Lower leg skin (tissue), 4 donors: ENCODE measurements at regions of chr14 and their contacts with region 1.

Region 1: GRCh38 chr14:61475316-61475715 is 153.9 kb downstream of the PRKCH start:
- DNase-seq: no peak
- H3K4me3 ChIP-seq: no peak overlapping the region
- CTCF ChIP-seq: no peak
- POLR2A ChIP-seq: no peak

Region 2: GRCh38 chr14:60862286-60862685 is 613.0 kb before region 1 on chr14:
- intact Hi-C with region 1: no loop called
- DNase-seq: peak in 1 of 2 donors; percentile 36
- H3K4me3 ChIP-seq: no peak overlapping the region
- CTCF ChIP-seq: no peak
- POLR2A ChIP-seq: no peak

Region 3: DNA sequence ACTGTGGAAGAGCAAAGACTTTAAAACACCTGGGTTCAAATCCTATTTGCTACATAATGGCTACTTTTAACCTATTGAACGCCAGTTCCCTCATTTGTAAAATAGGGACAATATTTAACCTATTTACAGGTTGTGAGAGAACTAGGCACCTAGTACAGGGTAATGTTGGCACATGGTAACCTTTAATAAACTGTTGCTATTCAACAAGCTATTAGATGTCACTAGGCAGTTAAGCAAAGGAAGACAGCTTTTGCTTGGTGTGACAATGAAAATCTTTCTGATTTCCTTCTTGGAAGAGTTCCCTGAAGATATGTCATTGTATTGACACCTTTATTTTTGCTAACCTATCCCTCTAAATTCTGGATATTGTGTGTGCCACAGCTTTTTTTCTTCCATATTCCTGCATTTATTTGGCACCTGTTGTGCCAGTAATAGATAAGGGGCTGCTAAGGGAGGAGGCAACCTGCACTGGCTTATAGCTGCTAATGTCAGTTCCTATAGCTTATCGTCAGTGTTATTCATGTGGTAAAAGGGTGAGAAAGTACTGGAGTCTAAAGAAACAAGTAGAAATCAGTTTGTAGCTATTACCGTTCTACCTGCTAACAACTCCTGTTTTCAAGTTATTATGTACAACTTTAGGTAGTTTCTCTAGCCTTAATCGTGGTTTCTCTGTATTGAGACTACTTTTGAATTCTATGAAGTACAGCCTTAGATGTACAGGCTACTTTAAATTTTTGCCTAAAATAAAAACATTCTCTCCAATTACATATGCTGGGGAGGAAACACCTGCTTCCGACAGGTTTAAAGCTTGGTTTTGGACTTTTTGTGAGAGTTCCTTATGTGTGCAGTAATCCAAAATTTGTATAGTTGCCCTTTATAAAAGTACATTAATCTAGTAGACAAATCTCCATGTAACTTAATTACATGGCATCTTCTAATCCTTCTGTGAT is 244.3 kb after region 1 on chr14:
- intact Hi-C with region 1: loop called (anchors 10 kb)
- DNase-seq: no peak
- H3K4me3 ChIP-seq: no peak overlapping the region
- CTCF ChIP-seq: no peak
- POLR2A ChIP-seq: no peak